ENCODE measurements at regions of chr7 and their contacts with region 1.

Region 1: DNA sequence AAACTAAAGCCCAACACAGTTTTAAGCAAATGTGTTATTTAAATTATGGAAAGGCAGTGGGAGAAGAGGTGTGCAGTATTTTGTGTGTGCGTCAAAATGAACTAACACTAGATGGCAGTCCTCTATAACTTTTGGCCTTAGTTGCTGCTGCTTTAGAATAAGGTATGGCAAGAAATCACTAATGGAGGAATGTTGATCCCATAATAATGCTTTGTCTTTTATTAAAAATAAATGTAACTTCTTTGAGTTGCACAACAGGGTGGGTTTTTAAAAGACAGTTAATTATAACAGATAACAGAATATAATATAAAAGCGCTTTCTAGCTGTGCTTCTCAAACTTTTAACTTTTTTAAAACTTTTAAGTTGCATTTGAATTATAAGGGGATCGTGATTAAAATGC is 56.4 kb downstream of the BBS9 start:
- DNase-seq: peak; percentile 70
- ATAC-seq: peak; percentile 98
- H3K4me3 ChIP-seq: no peak overlapping the region
- H3K27ac ChIP-seq: no peak overlapping the region
- H3K4me1 ChIP-seq: no peaks in the 10 kb centered on the region
- H3K27me3 ChIP-seq: no peaks in the 10 kb centered on the region
- CTCF ChIP-seq: peak; percentile 85

Region 2: DNA sequence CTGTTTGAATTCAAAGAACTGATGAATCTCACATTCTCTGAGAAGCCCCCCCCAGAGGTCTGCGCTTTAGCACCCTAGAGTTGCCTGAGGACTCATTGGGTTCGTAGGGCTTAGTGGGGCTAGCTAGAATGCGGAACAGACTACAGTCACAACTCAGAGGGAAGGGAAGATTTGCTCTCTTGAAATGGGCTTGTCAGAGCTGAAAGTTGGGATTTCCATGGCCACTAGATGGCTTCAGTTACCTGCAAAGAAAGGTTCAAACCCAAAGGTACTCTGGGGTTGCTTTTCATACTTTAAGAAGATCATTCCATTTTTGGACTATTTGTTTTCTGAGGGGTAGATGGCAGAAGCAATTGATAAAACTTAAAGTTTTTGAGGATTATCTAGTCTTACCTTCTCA is 148.6 kb after region 1 on chr7:
- CTCF ChIA-PET with region 1: interaction called, 3 read pairs
- POLR2A ChIA-PET with region 1: no interaction called
- intact Hi-C with region 1: loop called (anchors 10 kb)
- DNase-seq: peak; percentile 58
- ATAC-seq: peak; percentile 74
- H3K4me3 ChIP-seq: no peak overlapping the region
- H3K27ac ChIP-seq: no peak overlapping the region
- H3K4me1 ChIP-seq: no peaks in the 10 kb centered on the region
- H3K27me3 ChIP-seq: no peaks in the 10 kb centered on the region
- CTCF ChIP-seq: peak; percentile 75

Region 3: GRCh38 chr7:33459340-33459751 is 273.6 kb after region 1 on chr7:
- CTCF ChIA-PET with region 1: no interaction called
- POLR2A ChIA-PET with region 1: no interaction called
- intact Hi-C with region 1: loop called (anchors 5 kb)
- DNase-seq: peak; percentile 57
- ATAC-seq: peak; percentile 100
- H3K4me3 ChIP-seq: no peak overlapping the region
- H3K27ac ChIP-seq: no peak overlapping the region
- H3K4me1 ChIP-seq: no peaks in the 10 kb centered on the region
- H3K27me3 ChIP-seq: no peaks in the 10 kb centered on the region
- CTCF ChIP-seq: peak; percentile 79

Region 4: DNA sequence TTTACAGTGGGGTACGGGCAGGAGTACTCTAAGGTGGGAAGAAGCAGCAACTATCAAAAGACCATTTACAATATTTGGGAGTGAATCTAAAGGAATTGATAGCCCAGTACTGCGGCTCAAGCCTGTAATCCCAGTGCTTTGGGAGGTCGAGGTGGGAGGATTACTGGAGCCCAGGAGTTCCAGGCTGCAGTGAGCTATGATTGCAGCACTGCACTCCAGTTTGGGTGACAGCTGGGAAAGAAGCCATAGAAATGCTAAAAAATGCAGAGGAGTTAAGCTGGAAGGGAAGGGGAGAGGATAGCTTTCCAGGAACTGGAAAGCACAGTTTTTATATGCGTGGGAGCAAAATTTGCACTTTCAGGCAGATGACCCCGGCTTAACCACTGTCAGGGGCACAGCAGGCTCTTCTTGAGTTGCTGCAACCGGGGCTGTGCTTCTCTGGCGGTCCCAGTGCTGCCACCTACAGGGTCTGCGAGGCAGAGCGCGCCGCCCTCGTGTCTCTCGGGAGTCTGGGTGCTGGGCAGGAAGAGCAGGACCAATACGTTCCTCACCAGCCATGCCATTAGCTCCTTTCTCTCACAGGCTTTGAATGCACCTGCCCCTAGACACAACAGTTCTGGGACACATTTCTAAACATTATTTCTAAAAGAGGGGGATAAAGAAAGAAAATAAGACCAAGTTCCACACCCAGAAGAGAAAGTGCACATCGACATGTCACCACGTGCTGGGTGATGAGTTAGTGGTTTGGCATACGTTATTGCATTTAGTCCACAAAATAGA is 709.4 kb after region 1 on chr7:
- CTCF ChIA-PET with region 1: no interaction called
- POLR2A ChIA-PET with region 1: no interaction called
- intact Hi-C with region 1: loop called (anchors 1 kb)
- DNase-seq: peak; percentile 79
- ATAC-seq: peak; percentile 97
- H3K4me3 ChIP-seq: no peak overlapping the region
- H3K27ac ChIP-seq: no peak overlapping the region
- H3K4me1 ChIP-seq: peaks cover 11% of the 10 kb centered on the region; the same call in 1 of the 2 replicates
- H3K27me3 ChIP-seq: 0 out of 2 replicates have a peak, but pooled peaks cover 4% of the 10 kb centered on the region
- CTCF ChIP-seq: peak; percentile 85